WTC11 (cell line): ENCODE measurements at regions of chr3 and their contacts with region 1.

Region 1: DNA sequence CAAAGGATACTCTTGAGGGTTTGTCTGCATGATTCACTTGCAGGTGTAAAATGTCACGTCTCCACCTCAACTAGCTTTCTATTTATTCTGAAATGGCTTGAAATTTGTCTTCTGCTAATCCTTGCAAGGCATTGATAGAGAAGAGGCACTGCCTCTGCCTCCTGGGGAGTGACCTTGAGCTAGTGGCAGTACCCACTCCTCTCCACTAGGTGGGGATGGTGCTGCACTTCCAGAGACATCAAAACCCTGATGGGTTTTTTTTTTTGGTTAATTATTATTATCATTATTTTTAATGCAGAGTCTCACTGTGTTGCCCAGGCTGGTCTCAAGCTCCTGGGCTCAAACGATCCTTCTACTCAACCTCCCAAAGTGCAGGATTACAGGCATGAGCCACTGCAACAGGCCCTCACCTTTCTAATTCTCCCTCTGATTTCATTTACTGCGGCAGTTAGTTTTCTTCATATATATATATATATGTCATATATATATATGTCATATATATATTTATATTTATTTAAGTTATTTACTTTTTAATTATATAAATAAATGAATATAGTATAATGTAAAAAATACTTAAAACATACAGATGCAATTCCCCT is 117.6 kb upstream of the EIF1B start:
- DNase-seq: peak; percentile 76
- ATAC-seq: peak; percentile 72
- H3K4me3 Mint-ChIP-seq: no peak overlapping the region
- H3K27ac Mint-ChIP-seq: no peak overlapping the region
- H3K4me1 Mint-ChIP-seq: peaks cover 12% of the 10 kb centered on the region
- H3K27me3 Mint-ChIP-seq: no peaks in the 10 kb centered on the region; the same call in 1 of the 2 replicates
- CTCF ChIP-seq: peak; percentile 95

Region 2: GRCh38 chr3:40179016-40179415 is 12.9 kb before region 1 on chr3:
- CTCF ChIA-PET with region 1: interaction called, 37 read pairs
- POLR2A ChIA-PET with region 1: no interaction called
- DNase-seq: peak; percentile 87
- ATAC-seq: peak; percentile 75
- H3K4me3 Mint-ChIP-seq: no peak overlapping the region
- H3K27ac Mint-ChIP-seq: no peak overlapping the region
- H3K4me1 Mint-ChIP-seq: peaks cover 6% of the 10 kb centered on the region
- H3K27me3 Mint-ChIP-seq: no peaks in the 10 kb centered on the region
- CTCF ChIP-seq: peak; percentile 52

Region 3: GRCh38 chr3:40229386-40229785 is 37.4 kb after region 1 on chr3:
- CTCF ChIA-PET with region 1: interaction called, 10 read pairs
- POLR2A ChIA-PET with region 1: no interaction called
- DNase-seq: no peak
- ATAC-seq: no peak
- H3K4me3 Mint-ChIP-seq: no peak overlapping the region
- H3K27ac Mint-ChIP-seq: no peak overlapping the region; the same call in 1 of the 2 replicates
- H3K4me1 Mint-ChIP-seq: no peaks in the 10 kb centered on the region
- H3K27me3 Mint-ChIP-seq: no peaks in the 10 kb centered on the region
- CTCF ChIP-seq: no peak

Region 4: GRCh38 chr3:40237889-40238571 is 46.1 kb after region 1 on chr3:
- CTCF ChIA-PET with region 1: interaction called, 12 read pairs
- POLR2A ChIA-PET with region 1: no interaction called
- DNase-seq: peak; percentile 20
- ATAC-seq: peak; percentile 96
- H3K4me3 Mint-ChIP-seq: no peak overlapping the region
- H3K27ac Mint-ChIP-seq: no peak overlapping the region
- H3K4me1 Mint-ChIP-seq: peaks cover 8% of the 10 kb centered on the region
- H3K27me3 Mint-ChIP-seq: no peaks in the 10 kb centered on the region
- CTCF ChIP-seq: no peak

Region 5: GRCh38 chr3:40292637-40293349 is 100.8 kb after region 1 on chr3:
- CTCF ChIA-PET with region 1: interaction called, 12 read pairs
- POLR2A ChIA-PET with region 1: no interaction called
- DNase-seq: peak; percentile 20
- ATAC-seq: peak; percentile 75
- H3K4me3 Mint-ChIP-seq: no peak overlapping the region
- H3K27ac Mint-ChIP-seq: peak overlapping the region; percentile 55
- H3K4me1 Mint-ChIP-seq: peaks cover 40% of the 10 kb centered on the region
- H3K27me3 Mint-ChIP-seq: no peaks in the 10 kb centered on the region
- CTCF ChIP-seq: no peak

Region 6: DNA sequence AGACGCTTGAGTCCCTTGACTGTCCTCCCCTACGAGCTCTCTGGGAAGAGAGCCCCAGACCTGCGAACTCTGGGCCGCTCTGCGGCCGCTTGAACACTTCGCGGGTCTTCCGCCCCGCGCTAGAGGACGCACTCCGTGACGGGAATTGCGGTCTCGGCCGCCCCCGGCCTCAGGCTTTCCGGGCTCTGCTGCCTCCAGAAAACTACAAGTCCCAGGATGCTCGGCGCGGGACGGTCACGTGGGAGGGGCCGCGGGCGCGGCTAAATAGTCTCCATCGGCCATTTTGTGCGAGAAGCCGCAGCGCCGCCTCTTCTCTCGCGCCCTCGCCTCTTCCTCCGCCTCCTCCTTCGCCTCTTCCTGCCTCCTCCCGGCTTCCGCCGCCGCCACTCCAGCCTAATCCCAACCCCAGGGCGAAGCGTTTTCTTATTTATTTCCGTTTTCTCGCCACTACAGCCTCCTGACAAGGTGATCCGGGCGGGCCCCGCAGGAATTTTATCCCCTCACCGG is 117.5 kb after region 1 on chr3 and contains the start of gene EIF1B:
- CTCF ChIA-PET with region 1: interaction called, 49 read pairs
- POLR2A ChIA-PET with region 1: interaction called, 7 read pairs
- DNase-seq: peak; percentile 98
- ATAC-seq: peak; percentile 95
- H3K4me3 Mint-ChIP-seq: peak within 1 kb of the TSS; percentile 97
- H3K27ac Mint-ChIP-seq: peak within 1 kb of the TSS; percentile 97
- H3K4me1 Mint-ChIP-seq: peaks cover 18% of the 10 kb centered on the region
- H3K27me3 Mint-ChIP-seq: no peaks in the 10 kb centered on the region
- CTCF ChIP-seq: peak; percentile 66; the same call in 1 of the 2 replicates
- total RNA-seq, gene EIF1B: 82.0 to 93.2 TPM (median 90.6 TPM) in 3 replicates

Region 7: GRCh38 chr3:40317061-40317855 is 125.3 kb after region 1 on chr3:
- CTCF ChIA-PET with region 1: interaction called, 35 read pairs
- POLR2A ChIA-PET with region 1: interaction called, 7 read pairs
- DNase-seq: no peak
- ATAC-seq: peak; percentile 75
- H3K4me3 Mint-ChIP-seq: no peak overlapping the region
- H3K27ac Mint-ChIP-seq: no peak overlapping the region
- H3K4me1 Mint-ChIP-seq: no peaks in the 10 kb centered on the region
- H3K27me3 Mint-ChIP-seq: no peaks in the 10 kb centered on the region
- CTCF ChIP-seq: peak; percentile 74